Breast epithelium (tissue), 4 donors: ENCODE measurements at regions of chr2 and their contacts with region 1.

Region 1: DNA sequence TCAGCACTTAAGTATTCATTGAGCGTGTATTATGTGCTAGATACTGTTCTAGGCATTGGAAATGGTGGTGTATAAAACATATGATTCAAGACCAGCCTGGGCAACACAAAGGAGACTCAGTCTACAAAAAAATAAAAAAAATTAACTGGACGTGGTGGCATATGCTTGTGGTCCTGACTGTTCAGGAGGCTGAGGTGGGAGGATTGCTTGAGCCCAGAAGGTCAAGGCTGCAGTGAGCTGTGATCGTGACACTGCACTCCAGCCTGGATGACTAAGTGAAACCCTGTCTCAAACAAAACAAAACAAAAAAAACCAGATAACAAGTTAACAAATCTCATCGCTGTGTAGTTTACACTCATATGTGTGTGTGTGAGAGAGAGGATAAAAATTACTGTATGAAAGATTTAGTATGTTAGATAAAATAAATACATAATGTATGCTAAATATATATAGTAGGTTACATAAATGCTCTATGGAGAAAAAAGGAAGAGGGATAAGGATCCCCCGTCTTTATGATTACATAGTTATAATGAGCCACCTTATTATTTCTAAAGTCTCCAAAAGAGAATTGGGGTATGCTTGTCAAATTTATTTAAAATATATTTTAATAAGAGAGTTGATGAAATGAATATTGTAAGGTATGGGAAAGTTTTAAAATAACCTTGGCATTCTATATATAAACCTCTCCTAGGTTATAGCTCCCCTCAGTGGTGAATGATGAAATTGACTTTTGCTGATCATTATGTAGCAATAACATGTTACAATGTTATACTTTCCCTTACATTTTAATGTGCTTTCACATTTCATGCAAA is 69.2 kb downstream of the EHBP1 start:
- DNase-seq: no peak
- H3K4me3 ChIP-seq: no peak overlapping the region
- H3K27ac ChIP-seq: peak overlapping the region in 1 of 2 donors; percentile 23
- H3K4me1 ChIP-seq: no peaks in the 10 kb centered on the region
- H3K27me3 ChIP-seq: no peaks in the 10 kb centered on the region
- CTCF ChIP-seq: peak; percentile 43 to 80 (median 76)
- POLR2A ChIP-seq: no peak

Region 2: GRCh38 chr2:62456721-62457539 is 317.8 kb before region 1 on chr2:
- intact Hi-C with region 1: loop called (anchors 10 kb)
- DNase-seq: peak in 1 of 2 donors; percentile 67
- H3K4me3 ChIP-seq: peak overlapping the region; percentile 55 to 73 (median 61)
- H3K27ac ChIP-seq: peak overlapping the region; percentile 56 to 81
- H3K4me1 ChIP-seq: no peaks in the 10 kb centered on the region
- H3K27me3 ChIP-seq: no peaks in the 10 kb centered on the region
- CTCF ChIP-seq: peak; percentile 96 to 98 (median 96)
- POLR2A ChIP-seq: no peak